ENCODE measurements at regions of chr11 and their contacts with region 1.

Region 1: DNA sequence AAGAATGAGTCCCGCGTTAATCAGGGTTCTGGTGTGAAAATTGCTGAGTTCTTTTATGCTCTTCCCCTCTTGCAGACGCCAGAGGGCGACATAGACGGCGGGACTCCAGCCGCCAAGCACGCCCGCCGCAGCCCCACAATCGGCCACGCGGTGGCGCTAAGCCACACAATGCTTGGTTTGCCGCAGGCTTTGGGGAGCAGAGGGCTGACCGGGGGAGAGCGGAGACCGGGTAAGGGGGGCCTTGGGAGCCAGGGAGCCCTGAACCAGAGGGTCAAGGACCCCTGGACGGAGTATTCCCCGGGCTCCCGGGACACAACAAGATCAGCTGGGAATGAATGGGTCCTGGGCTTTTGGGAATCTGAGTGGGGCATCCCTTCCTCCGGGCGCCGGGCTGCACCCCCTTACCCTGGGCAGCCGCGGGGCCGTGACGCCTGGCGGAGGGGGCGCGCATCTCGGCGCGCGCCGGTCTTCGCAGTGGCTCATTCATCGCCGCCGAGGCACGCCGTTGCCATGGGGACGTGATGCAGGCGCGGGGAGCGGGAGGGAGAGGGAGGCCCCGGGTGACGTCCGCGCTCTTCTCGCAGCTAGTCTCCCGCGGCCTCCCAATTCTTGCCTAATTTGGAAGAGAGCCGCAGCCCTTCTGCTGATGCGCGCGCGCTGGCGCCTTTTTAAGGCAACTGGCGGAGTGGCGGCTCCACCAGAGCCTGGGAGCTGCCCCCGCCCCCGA is 12.2 kb upstream of the NPAS4 start:
- DNase-seq: peak; percentile 84 to 97 (median 93)
- ATAC-seq: peak; percentile 88
- H3K4me3 ChIP-seq: peak overlapping the region; percentile 34
- H3K4me3 Mint-ChIP-seq: peak overlapping the region; percentile 84
- H3K27ac ChIP-seq: no peak overlapping the region
- H3K27ac Mint-ChIP-seq: no peak overlapping the region
- H3K4me1 ChIP-seq: peaks cover 14% of the 10 kb centered on the region
- H3K4me1 Mint-ChIP-seq: peaks cover 5% of the 10 kb centered on the region
- H3K27me3 ChIP-seq: peaks cover 2 to 19% of the 10 kb centered on the region in 2 experiments
- H3K27me3 Mint-ChIP-seq: peaks cover 50% of the 10 kb centered on the region
- CTCF ChIP-seq: peak; percentile 100

Region 2: GRCh38 chr11:66218846-66219620 is 189.6 kb before region 1 on chr11:
- CTCF ChIA-PET with region 1: no interaction called
- POLR2A ChIA-PET with region 1: no interaction called
- intact Hi-C with region 1: no loop called
- DNase-seq: no peak
- ATAC-seq: no peak
- H3K4me3 ChIP-seq: no peak overlapping the region
- H3K4me3 Mint-ChIP-seq: no peak overlapping the region
- H3K27ac ChIP-seq: no peak overlapping the region
- H3K27ac Mint-ChIP-seq: no peak overlapping the region
- H3K4me1 ChIP-seq: peaks cover 15% of the 10 kb centered on the region
- H3K4me1 Mint-ChIP-seq: peaks cover 7% of the 10 kb centered on the region
- H3K27me3 ChIP-seq: no peaks in the 10 kb centered on the region
- H3K27me3 Mint-ChIP-seq: no peaks in the 10 kb centered on the region
- CTCF ChIP-seq: no peak

Region 3: GRCh38 chr11:66421492-66422205 is 13.0 kb after region 1 on chr11:
- CTCF ChIA-PET with region 1: interaction called, 14 read pairs
- POLR2A ChIA-PET with region 1: interaction called, 7 read pairs
- intact Hi-C with region 1: no loop called
- DNase-seq: peak; percentile 78 to 95 (median 86)
- ATAC-seq: peak; percentile 97
- H3K4me3 ChIP-seq: no peak overlapping the region
- H3K4me3 Mint-ChIP-seq: no peak overlapping the region
- H3K27ac ChIP-seq: no peak overlapping the region
- H3K27ac Mint-ChIP-seq: peak overlapping the region; percentile 45
- H3K4me1 ChIP-seq: peaks cover 11% of the 10 kb centered on the region
- H3K4me1 Mint-ChIP-seq: peaks cover 6% of the 10 kb centered on the region
- H3K27me3 ChIP-seq: peaks cover 26 to 37% of the 10 kb centered on the region in 2 experiments
- H3K27me3 Mint-ChIP-seq: peaks cover 40% of the 10 kb centered on the region
- CTCF ChIP-seq: no peak

Region 4: DNA sequence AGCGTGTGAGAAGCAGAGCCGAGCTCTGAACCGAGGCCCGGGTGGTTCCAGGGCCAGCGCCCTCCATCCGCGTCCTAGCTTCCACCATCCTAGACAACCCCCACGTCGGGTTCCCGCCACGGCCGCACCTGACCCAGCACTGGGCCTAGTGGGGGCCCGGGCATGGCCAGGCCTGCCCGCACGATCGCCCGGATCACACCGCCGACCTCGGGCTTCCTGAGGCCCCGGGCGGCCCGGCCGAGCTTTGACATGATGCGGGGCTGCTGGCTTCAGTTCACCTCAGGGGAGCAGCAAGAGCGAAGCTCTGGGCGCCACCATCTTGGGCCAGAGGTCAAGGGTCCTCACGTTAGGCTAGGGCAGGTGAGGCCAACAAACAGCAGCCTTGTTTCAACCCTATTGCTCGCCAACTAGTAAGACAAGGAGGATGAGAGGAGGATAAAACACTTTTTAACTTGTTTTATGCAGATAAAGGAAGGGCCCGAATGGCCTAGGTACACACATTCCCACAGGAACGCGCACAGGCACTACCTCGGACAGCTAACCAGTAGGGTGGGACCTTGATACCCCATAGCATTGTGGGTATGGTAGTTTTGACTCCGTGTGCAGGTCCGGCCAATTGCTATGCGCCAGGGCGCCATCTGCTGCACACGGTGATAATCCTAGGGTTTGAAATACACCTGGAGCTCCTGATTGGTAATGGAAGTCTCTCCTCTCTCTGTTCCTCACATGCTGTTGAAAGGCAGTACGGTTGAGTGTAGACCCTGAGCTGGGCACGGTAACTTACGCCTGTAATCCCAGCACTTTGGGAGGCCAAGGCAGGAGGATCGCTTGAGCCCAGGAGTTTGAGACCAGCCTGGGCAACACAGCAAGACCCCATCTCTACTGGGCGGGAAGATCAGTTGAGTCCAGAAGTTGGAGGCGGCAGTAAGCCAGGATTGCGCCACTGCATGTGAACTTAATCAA is 30.1 kb after region 1 on chr11 and contains the start of gene MRPL11:
- CTCF ChIA-PET with region 1: interaction called, 20 read pairs
- POLR2A ChIA-PET with region 1: interaction called, 4 read pairs
- intact Hi-C with region 1: loop called (anchors 1 kb)
- DNase-seq: peak; percentile 78 to 95 (median 86)
- ATAC-seq: peak; percentile 99
- H3K4me3 ChIP-seq: peak within 1 kb of the TSS; percentile 70
- H3K4me3 Mint-ChIP-seq: peak within 1 kb of the TSS; percentile 94
- H3K27ac ChIP-seq: peak within 1 kb of the TSS; percentile 67 to 89
- H3K27ac Mint-ChIP-seq: peak within 1 kb of the TSS; percentile 87
- H3K4me1 ChIP-seq: peaks cover 11% of the 10 kb centered on the region
- H3K4me1 Mint-ChIP-seq: peaks cover 13% of the 10 kb centered on the region
- H3K27me3 ChIP-seq: no peaks in the 10 kb centered on the region
- H3K27me3 Mint-ChIP-seq: peaks cover 3% of the 10 kb centered on the region
- CTCF ChIP-seq: peak; percentile 69
- total RNA-seq, gene MRPL11: 17.7 to 21.0 TPM

Region 5: GRCh38 chr11:66579017-66579606 is 170.5 kb after region 1 on chr11:
- CTCF ChIA-PET with region 1: interaction called, 3 read pairs
- POLR2A ChIA-PET with region 1: no interaction called
- intact Hi-C with region 1: loop called (anchors 1 kb)
- DNase-seq: peak; percentile 60 to 89 (median 72)
- ATAC-seq: peak; percentile 82
- H3K4me3 ChIP-seq: no peak overlapping the region
- H3K4me3 Mint-ChIP-seq: no peak overlapping the region
- H3K27ac ChIP-seq: no peak overlapping the region
- H3K27ac Mint-ChIP-seq: no peak overlapping the region
- H3K4me1 ChIP-seq: peaks cover 8% of the 10 kb centered on the region
- H3K4me1 Mint-ChIP-seq: peaks cover 8% of the 10 kb centered on the region
- H3K27me3 ChIP-seq: no peaks in the 10 kb centered on the region
- H3K27me3 Mint-ChIP-seq: peaks cover 6% of the 10 kb centered on the region
- CTCF ChIP-seq: peak; percentile 85

Region 6: GRCh38 chr11:66842896-66843775 is 434.5 kb after region 1 on chr11 and contains the start of gene RCE1:
- CTCF ChIA-PET with region 1: no interaction called
- POLR2A ChIA-PET with region 1: no interaction called
- intact Hi-C with region 1: loop called in 1 of 2 experiments (anchors 1 kb)
- DNase-seq: peak; percentile 80 to 98 (median 90)
- ATAC-seq: peak; percentile 82
- H3K4me3 ChIP-seq: peak within 1 kb of the TSS; percentile 96
- H3K4me3 Mint-ChIP-seq: peak within 1 kb of the TSS; percentile 94
- H3K27ac ChIP-seq: peak within 1 kb of the TSS; percentile 97 to 99
- H3K27ac Mint-ChIP-seq: peak within 1 kb of the TSS; percentile 96
- H3K4me1 ChIP-seq: peaks cover 49% of the 10 kb centered on the region
- H3K4me1 Mint-ChIP-seq: peaks cover 52% of the 10 kb centered on the region
- H3K27me3 ChIP-seq: no peaks in the 10 kb centered on the region
- H3K27me3 Mint-ChIP-seq: no peaks in the 10 kb centered on the region
- CTCF ChIP-seq: no peak
- total RNA-seq, gene RCE1: 60.1 to 63.0 TPM

Measured in CD4-positive, alpha-beta T cell (primary cell).